BJ (cell line): ENCODE measurements at regions of chr21 and their contacts with region 1.

Region 1: DNA sequence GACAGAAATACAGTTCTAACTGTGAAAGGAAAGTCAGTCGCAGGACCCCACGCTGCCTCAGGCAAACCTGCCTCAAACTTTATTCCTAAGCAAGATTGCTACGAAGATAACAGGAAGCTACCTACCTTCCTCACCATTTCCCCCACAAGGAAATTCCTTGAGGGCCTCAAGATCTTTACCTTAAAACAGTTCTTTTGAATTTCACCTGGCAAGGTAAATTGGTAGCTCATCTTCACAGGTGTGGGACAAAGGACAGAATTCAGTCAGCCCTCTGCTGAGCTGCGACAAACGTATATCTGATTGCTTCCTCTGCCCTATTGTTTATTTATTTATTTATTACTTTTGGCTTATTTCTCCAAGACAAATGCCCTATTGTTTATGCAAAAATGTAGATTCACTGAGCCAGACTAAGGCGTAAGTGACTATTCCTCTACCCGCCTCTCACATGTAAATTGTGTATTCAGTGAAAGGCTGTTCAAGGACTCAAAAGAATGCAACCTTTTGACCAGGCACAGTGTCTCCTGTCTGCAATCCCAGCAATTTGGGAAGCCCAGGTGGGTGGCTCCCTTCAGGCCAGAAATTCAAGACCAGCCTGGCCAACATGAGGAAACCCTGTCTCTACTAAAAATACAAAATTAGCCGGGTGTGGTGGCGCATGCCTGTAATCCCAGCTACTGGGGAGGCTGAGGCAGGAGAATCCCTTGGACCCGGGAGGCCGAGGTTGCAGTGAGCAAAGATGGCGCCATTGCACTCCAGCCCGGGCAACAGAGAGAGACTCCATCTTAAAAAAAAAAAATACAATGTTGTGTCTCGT is 17.3 kb upstream of the PKNOX1 start:
- DNase-seq: no peak
- H3K4me3 ChIP-seq: no peak overlapping the region
- H3K27me3 ChIP-seq: no peaks in the 10 kb centered on the region
- CTCF ChIP-seq: no peak

Region 2: GRCh38 chr21:41877901-41878830 is 1078.9 kb before region 1 on chr21:
- CTCF ChIA-PET with region 1: no interaction called
- POLR2A ChIA-PET with region 1: interaction called, 12 read pairs
- DNase-seq: no peak
- H3K4me3 ChIP-seq: peak overlapping the region; percentile 85
- H3K27me3 ChIP-seq: no peaks in the 10 kb centered on the region
- CTCF ChIP-seq: no peak

Region 3: DNA sequence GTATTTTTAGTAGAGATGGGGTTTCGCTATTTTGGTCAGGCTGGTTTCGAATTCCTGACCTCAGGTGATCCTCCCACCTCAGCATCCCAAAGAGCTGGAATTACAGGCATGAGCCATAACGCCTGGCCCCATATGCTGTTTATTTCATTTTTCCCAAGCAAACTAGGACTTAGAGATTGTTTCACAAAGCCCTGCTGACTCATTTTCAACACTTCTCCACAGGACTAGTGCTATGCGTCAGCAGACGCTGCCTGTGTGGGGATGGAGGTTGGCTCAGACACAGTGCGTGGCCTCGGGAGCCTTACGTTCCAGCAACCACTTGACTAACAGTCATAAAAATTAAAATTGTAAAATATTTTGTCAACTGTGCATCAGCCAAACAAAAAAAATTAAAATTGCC is 40.0 kb after region 1 on chr21:
- CTCF ChIA-PET with region 1: no interaction called
- POLR2A ChIA-PET with region 1: no interaction called
- DNase-seq: peak; percentile 93
- H3K4me3 ChIP-seq: no peak overlapping the region
- H3K27me3 ChIP-seq: no peaks in the 10 kb centered on the region
- CTCF ChIP-seq: no peak